ENCODE measurements at regions of chr14 and their contacts with region 1.

Region 1: GRCh38 chr14:26289891-26290486 is 307.8 kb downstream of the NOVA1 start:
- DNase-seq: no peak
- H3K4me3 ChIP-seq: no peak overlapping the region
- H3K27ac ChIP-seq: no peak overlapping the region
- H3K4me1 ChIP-seq: peaks cover 6% of the 10 kb centered on the region; the same call in 1 of the 2 replicates
- H3K27me3 ChIP-seq: no peaks in the 10 kb centered on the region
- CTCF ChIP-seq: no peak

Region 2: GRCh38 chr14:26262422-26262821 is 27.6 kb before region 1 on chr14:
- CTCF ChIA-PET with region 1: no interaction called
- POLR2A ChIA-PET with region 1: interaction called, 15 read pairs
- intact Hi-C with region 1: no loop called
- DNase-seq: no peak
- H3K4me3 ChIP-seq: no peak overlapping the region
- H3K27ac ChIP-seq: no peak overlapping the region
- H3K4me1 ChIP-seq: no peaks in the 10 kb centered on the region
- H3K27me3 ChIP-seq: no peaks in the 10 kb centered on the region
- CTCF ChIP-seq: no peak

Region 3: DNA sequence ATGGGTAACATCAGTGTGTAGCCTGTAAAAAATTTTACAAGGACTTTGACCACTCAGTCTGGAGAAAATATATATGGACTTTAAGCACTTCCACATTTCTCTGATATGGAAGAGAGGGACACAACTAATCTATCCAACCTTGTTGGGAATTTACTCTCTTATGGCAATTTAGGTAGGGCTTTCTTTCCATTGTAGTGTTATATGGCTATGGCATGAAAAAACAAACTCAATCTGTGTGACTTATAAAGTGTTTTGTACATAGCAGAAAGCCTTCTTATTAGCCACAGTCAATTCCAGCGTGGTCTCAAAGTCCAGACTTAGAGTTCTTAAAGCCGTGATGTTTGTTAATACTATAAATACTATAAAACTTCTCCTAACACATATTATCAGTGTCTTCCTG is 209.6 kb after region 1 on chr14:
- CTCF ChIA-PET with region 1: no interaction called
- POLR2A ChIA-PET with region 1: no interaction called
- intact Hi-C with region 1: no loop called
- DNase-seq: no peak
- H3K4me3 ChIP-seq: no peak overlapping the region
- H3K27ac ChIP-seq: no peak overlapping the region
- H3K4me1 ChIP-seq: no peaks in the 10 kb centered on the region
- H3K27me3 ChIP-seq: no peaks in the 10 kb centered on the region
- CTCF ChIP-seq: no peak